Thyroid gland (tissue), 4 donors: ENCODE measurements at regions of chr3 and their contacts with region 1.

Region 1: DNA sequence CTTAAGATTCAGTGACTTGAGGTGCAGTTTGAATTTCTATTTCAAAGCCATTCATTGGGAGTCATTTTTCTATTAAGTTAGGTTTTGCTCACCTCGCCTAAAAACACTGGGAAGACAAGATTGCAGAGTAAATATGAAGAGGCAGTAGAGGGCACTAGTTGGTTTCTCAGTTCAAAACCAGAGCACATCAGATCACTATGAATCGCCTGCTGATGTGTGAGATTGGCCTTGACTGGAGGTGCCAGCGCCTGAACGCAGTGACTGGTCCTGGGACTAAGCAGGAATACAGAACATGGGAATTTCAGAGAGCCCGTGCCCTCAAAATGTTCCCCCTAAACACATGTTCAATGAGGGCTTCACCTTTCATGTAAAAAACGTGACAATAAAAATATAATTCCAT is 229.0 kb downstream of the ITPR1 start:
- DNase-seq: peak; percentile 39 to 53
- H3K4me3 ChIP-seq: no peak overlapping the region
- H3K27ac ChIP-seq: peak overlapping the region; percentile 82 to 95 (median 86)
- H3K4me1 ChIP-seq: peaks cover 50 to 70% of the 10 kb centered on the region in 2 donors
- H3K27me3 ChIP-seq: no peaks in the 10 kb centered on the region
- CTCF ChIP-seq: peak in 5 of 6 experiments; percentile 20 to 57 (median 34)
- POLR2A ChIP-seq: no peak

Region 2: DNA sequence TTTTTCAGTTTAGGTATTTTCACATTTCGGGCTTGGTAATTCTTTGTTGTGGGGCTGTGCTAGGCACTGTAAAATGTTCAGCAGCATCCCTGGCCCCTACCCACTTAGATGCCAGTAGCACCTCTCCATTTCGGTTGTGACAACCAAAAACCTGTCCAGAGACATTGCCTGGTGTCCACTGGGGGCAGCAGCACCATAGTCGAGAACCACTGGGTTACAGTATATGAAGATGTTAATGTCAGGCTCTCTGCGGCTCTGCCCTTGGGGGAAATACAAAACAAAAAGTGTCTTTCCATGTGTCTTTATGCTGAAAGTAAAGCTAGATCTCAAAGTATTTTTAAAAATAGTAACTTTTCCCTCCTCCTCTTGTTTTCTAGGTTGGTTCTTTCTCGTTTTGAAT is 51.8 kb before region 1 on chr3:
- intact Hi-C with region 1: no loop called
- DNase-seq: no peak
- H3K4me3 ChIP-seq: no peak overlapping the region
- H3K27ac ChIP-seq: no peak overlapping the region
- H3K4me1 ChIP-seq: no peaks in the 10 kb centered on the region
- H3K27me3 ChIP-seq: no peaks in the 10 kb centered on the region
- CTCF ChIP-seq: no peak
- POLR2A ChIP-seq: no peak

Region 3: GRCh38 chr3:4818986-4819693 is 97.0 kb after region 1 on chr3:
- intact Hi-C with region 1: loop called (anchors 5 kb)
- DNase-seq: no peak
- H3K4me3 ChIP-seq: no peak overlapping the region
- H3K27ac ChIP-seq: peak overlapping the region in 1 of 3 donors; percentile 90
- H3K4me1 ChIP-seq: peaks cover 29 to 43% of the 10 kb centered on the region in 2 donors
- H3K27me3 ChIP-seq: no peaks in the 10 kb centered on the region
- CTCF ChIP-seq: no peak
- POLR2A ChIP-seq: no peak